GM10248 (cell line): ENCODE measurements at regions of chr11 and their contacts with region 1.

Region 1: DNA sequence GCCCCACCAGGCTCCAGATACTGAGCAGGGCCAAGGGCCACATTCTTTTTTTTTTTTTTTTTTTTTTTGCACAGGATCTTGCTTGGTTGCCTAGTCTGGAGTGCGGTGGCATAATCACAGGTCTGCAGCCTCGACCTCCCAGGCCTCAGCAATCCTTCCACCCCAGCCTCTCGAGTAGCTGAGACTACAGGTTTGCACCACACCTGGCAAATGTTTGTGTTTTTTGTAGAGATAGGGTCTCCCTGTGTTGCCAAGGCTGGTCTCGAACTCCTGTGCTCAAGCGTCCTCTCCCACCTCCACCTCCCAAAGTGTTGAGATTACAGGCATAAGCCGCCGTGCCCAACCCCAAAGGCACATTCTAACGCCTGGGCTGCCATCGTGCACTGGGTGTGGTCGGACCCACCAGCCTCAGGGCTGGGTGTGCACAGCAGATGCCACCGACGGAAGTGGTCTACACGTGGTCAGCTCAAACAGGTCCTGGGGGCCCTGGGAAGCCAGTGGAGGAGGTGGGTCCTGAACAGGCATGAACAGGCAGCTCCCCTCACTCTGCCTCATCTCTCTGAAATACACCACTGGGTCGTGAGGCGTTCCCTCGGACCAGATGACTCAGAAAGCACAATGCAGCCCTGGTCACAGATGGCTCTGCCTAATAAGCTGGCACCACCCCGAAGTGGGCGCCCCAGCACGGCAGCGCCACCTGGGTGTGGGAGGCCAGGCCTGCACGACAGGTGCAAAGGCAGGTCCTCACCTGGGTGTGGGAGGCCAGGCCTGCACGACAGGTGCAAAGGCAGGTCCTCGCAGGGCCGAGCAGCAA is 5.1 kb upstream of the B4GALNT4 start:
- DNase-seq: no peak
- CTCF ChIP-seq: peak; percentile 68

Region 2: DNA sequence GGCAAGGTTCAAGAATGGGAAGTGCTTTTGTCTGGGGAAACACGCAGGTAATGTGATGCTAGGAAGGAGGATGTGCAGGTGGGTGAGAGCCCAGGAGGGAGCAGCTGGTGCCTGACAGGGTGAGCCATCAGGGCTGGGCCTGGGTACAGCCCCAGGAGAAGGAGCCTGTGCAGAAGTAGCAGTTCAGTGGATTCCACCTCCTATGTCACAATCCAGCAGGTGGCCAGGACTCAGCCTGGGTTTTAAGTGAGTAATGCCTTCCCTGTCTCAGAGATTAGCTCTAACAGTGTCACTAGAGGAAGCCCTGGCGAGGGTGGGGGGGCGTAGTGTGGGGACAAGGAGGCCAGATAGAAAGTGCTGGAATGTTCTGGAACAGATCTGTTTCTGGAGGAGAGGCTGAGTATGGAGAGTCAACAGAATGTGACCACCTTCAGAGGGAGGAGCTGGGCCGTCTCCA is 148.5 kb before region 1 on chr11:
- CTCF ChIA-PET with region 1: interaction called, 11 read pairs
- POLR2A ChIA-PET with region 1: no interaction called
- DNase-seq: no peak
- CTCF ChIP-seq: no peak

Region 3: GRCh38 chr11:340539-341512 is 23.3 kb before region 1 on chr11:
- CTCF ChIA-PET with region 1: interaction called, 10 read pairs
- POLR2A ChIA-PET with region 1: interaction called, 3 read pairs
- DNase-seq: no peak
- CTCF ChIP-seq: no peak

Region 4: DNA sequence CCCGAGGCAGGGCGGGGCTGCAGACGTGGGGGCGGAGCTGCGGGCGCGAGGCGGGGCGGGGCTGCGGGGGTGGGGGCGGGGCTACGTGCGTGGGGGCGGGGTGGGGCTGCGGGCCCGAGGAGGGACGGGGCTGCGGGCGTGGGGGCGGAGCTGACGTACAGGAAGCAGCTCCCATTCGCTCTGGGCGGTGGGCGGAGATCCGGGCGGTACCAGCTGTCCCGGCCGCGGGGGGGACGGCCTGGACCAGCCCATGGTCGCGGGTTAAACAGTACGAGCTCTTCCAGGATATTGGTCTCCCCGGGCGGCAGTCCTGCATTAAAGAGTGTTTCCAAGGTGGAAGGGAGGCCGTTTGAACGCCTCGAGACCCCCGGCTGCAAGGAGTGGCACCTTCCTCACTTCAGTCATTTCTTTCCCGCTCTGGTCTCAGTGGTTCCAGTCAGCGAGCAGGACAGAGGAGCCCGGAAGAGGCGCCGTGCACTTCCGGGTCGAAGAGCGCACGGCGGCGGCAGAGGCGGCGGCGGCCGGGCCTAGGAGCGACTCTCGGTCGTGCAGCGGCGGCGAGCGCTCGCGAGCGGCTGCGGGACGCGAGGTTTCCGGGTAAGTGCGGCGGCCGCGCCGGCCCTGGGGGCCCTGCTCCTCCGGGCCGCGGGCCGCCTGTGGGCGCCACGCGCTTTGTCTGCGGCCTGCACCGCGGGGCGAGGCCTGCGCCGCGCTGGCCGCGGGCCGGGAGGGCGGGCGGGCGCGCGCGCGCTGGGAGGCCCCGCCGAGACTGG is 212.0 kb after region 1 on chr11 and contains the start of gene PHRF1:
- CTCF ChIA-PET with region 1: no interaction called
- POLR2A ChIA-PET with region 1: no interaction called
- DNase-seq: peak; percentile 100
- CTCF ChIP-seq: no peak